IMR-90 (cell line): ENCODE measurements at regions of chr21 and their contacts with region 1.

Region 1: GRCh38 chr21:37711836-37712568 is 204.3 kb downstream of the KCNJ6 start:
- DNase-seq: peak; percentile 73
- ATAC-seq: peak; percentile 97
- H3K4me3 ChIP-seq: no peak overlapping the region
- H3K27ac ChIP-seq: no peak overlapping the region
- H3K4me1 ChIP-seq: peaks cover 10% of the 10 kb centered on the region
- H3K27me3 ChIP-seq: peaks cover 3% of the 10 kb centered on the region
- CTCF ChIP-seq: peak; percentile 95
- POLR2A ChIP-seq: no peak
- RAD21 ChIP-seq: peak; percentile 94

Region 2: DNA sequence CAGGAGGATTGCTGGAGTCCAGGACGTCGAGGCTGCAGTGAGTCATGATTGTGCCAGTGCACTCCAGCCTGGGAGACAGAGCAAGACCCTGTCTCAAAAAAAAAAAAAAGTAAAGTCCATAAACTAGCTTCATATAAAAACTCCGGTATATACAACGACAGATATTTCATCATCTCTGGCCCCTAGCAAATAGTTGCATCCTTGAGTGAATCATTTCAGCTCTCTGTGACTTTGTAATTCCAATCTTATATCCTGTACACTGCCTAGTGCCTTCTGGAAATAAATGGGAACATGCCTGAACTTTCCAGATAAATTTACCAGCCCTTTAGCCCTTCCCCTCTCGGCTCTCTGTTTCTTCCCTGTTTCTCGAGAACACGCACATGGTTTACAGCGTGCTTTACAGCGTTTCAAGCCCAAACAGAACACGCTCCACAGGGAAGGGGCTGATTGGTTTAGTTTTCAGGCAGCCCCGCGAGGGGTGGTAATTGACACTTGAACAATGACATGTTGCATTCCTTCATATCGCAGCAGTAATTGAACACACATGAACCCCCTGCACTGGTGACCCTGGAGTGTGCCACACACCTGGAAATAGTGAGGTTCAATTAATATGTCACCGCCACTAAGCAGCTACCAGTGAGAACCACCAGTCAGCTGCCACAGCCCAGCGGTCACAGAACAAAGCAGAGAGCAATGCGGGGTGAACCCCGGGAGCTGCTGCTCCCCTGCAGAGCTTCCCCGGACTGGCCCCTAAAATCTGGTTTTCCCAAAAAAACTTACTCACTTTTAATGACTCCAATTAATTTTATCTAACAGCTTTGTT is 1048.8 kb before region 1 on chr21:
- CTCF ChIA-PET with region 1: no interaction called
- POLR2A ChIA-PET with region 1: no interaction called
- dilution Hi-C with region 1: no loop called
- in situ Hi-C with region 1: no loop called
- intact Hi-C with region 1: no loop called
- DNase-seq: peak; percentile 33
- ATAC-seq: peak; percentile 48
- H3K4me3 ChIP-seq: no peak overlapping the region
- H3K27ac ChIP-seq: no peak overlapping the region
- H3K4me1 ChIP-seq: peaks cover 3% of the 10 kb centered on the region; the same call in 1 of the 2 replicates
- H3K27me3 ChIP-seq: peaks cover 41% of the 10 kb centered on the region
- CTCF ChIP-seq: no peak
- POLR2A ChIP-seq: no peak
- RAD21 ChIP-seq: no peak

Region 3: GRCh38 chr21:37700641-37701202 is 11.3 kb before region 1 on chr21:
- CTCF ChIA-PET with region 1: interaction called, 5 read pairs
- POLR2A ChIA-PET with region 1: interaction called, 12 read pairs
- dilution Hi-C with region 1: no loop called
- in situ Hi-C with region 1: no loop called
- intact Hi-C with region 1: no loop called
- DNase-seq: peak; percentile 84
- ATAC-seq: peak; percentile 100
- H3K4me3 ChIP-seq: no peak overlapping the region
- H3K27ac ChIP-seq: no peak overlapping the region
- H3K4me1 ChIP-seq: no peaks in the 10 kb centered on the region
- H3K27me3 ChIP-seq: peaks cover 22% of the 10 kb centered on the region
- CTCF ChIP-seq: peak; percentile 78
- POLR2A ChIP-seq: no peak
- RAD21 ChIP-seq: peak; percentile 78

Region 4: GRCh38 chr21:37771181-37771580 is 59.2 kb after region 1 on chr21:
- CTCF ChIA-PET with region 1: interaction called, 3 read pairs
- POLR2A ChIA-PET with region 1: no interaction called
- dilution Hi-C with region 1: no loop called
- in situ Hi-C with region 1: loop called (anchors 10 kb)
- intact Hi-C with region 1: no loop called
- DNase-seq: no peak
- ATAC-seq: no peak
- H3K4me3 ChIP-seq: no peak overlapping the region
- H3K27ac ChIP-seq: no peak overlapping the region
- H3K4me1 ChIP-seq: peaks cover 2% of the 10 kb centered on the region
- H3K27me3 ChIP-seq: peaks cover 4% of the 10 kb centered on the region
- CTCF ChIP-seq: no peak
- POLR2A ChIP-seq: no peak
- RAD21 ChIP-seq: no peak

Region 5: DNA sequence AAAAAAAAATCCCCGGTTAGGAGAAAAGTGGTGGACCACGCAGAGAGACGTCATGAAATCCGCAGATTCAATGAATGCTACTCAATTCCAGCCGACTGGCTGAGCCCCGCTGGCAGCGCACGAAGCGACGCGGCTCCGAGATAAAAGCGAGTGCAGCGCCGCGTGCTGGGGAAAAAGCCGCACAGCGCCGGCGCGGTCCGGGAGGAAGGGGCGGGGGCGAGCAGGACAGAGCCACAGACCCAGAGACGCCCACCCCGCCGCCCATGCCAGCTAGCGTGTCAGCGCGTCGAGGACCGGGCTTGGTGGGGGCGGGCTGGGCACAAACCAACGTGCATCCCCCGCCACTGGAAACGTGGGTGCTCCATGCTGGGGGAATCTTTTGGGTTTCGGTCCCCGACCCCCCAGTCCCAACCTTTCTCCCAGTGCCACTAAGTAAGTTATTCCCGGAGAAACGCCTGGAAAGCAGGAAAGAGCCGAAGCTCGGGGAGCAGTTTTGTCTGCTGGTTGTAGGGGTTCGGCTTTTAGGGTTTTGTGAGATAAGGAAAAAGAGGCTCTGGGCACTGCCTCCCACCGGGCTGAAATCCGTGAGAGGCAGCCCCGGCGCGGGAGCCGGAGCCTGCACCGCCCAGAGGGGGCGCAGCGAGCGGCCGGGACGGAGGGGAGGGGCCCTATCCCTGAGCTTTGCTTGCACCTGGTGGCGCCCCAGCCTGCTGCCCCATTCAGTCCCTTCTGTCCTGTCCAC is 204.5 kb after region 1 on chr21 and contains the start of gene KCNJ6:
- CTCF ChIA-PET with region 1: interaction called, 11 read pairs
- POLR2A ChIA-PET with region 1: no interaction called
- dilution Hi-C with region 1: no loop called
- in situ Hi-C with region 1: loop called (anchors 10 kb)
- intact Hi-C with region 1: loop called (anchors 1 kb)
- DNase-seq: peak; percentile 52
- ATAC-seq: peak; percentile 89
- H3K4me3 ChIP-seq: peak within 1 kb of the TSS; percentile 14
- H3K27ac ChIP-seq: no peak within 1 kb of the TSS; the same call in 1 of the 2 replicates
- H3K4me1 ChIP-seq: peaks cover 6% of the 10 kb centered on the region
- H3K27me3 ChIP-seq: peaks cover 37% of the 10 kb centered on the region
- CTCF ChIP-seq: peak; percentile 91
- POLR2A ChIP-seq: no peak
- RAD21 ChIP-seq: peak; percentile 90
- total RNA-seq, gene KCNJ6: under 0.01 TPM in 2 replicates

Region 6: GRCh38 chr21:38126669-38127303 is 414.8 kb after region 1 on chr21:
- CTCF ChIA-PET with region 1: interaction called, 4 read pairs
- POLR2A ChIA-PET with region 1: no interaction called
- dilution Hi-C with region 1: no loop called
- in situ Hi-C with region 1: loop called (anchors 10 kb)
- intact Hi-C with region 1: loop called (anchors 1 kb)
- DNase-seq: peak; percentile 33
- ATAC-seq: peak; percentile 81
- H3K4me3 ChIP-seq: no peak overlapping the region
- H3K27ac ChIP-seq: no peak overlapping the region
- H3K4me1 ChIP-seq: no peaks in the 10 kb centered on the region
- H3K27me3 ChIP-seq: peaks cover 22% of the 10 kb centered on the region
- CTCF ChIP-seq: peak; percentile 77
- POLR2A ChIP-seq: no peak
- RAD21 ChIP-seq: peak; percentile 83

Region 7: DNA sequence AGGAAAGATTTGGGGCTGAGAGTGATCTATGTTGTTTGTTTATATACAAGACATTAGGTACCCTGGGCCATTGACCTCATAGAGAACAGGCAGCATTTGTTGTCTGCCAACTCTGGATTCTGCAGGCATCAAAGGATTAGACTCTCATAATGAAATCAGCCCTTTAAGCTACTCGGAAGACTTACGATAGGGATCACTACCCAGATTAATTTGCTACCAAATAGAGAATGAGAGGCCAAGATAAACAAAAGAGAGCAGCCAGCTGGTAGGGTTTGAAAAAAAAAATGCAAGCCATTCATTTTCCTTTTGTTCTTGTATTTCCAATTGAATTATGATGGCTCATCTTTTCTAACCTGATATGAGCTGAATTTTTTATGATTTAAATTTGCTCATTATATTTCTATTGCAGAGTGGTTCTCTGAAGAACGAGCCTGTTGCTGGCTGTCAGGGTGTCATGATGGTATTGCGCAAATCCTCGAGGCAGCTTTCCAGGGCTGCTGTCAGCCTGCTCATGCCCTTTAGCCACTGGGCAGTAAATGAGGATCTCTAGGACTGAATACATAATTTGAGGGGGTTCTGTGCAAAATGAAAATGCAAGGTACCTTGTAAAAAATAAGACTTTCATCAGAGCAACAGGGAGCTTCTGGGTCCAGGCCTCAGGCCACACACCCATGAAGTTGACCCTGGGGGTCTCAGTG is 428.4 kb after region 1 on chr21:
- CTCF ChIA-PET with region 1: no interaction called
- POLR2A ChIA-PET with region 1: no interaction called
- dilution Hi-C with region 1: no loop called
- in situ Hi-C with region 1: loop called (anchors 10 kb)
- intact Hi-C with region 1: no loop called
- DNase-seq: peak; percentile 25
- ATAC-seq: peak; percentile 70
- H3K4me3 ChIP-seq: no peak overlapping the region
- H3K27ac ChIP-seq: peak overlapping the region; percentile 63
- H3K4me1 ChIP-seq: peaks cover 6% of the 10 kb centered on the region
- H3K27me3 ChIP-seq: peaks cover 6% of the 10 kb centered on the region
- CTCF ChIP-seq: no peak
- POLR2A ChIP-seq: no peak
- RAD21 ChIP-seq: no peak